ENCODE measurements at regions of chr5 and their contacts with region 1.

Region 1: DNA sequence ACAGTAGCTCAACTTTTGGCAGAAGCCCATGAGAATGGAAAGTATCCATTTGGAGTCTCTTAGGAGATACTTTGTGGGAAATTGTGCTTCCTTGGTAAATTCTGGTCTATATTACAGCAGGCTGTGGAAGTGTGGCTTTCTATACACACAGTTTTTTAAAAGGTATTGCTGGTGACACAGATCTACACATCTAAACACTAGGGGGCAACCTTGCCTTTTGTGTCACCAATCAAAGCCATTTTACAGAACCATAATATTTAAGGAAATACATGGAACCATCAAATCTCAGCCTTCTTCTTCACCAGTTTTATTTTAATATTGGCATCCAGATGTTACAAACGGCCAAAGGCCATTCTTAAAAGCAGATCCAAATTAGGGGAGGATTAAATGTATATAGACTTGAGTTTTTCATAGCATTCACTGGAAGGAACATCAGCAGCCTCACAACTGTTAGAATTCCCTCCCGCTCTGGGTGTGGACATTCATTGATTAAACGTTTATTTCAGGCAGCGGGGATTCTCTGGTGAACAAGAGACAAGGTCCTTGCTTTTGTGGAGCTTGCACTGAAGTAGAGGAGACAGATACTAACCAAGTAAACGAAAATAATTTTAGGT is 132.4 kb upstream of the EPB41L4A start:
- DNase-seq: peak; percentile 34 to 60 (median 57)
- H3K4me3 ChIP-seq: no peak overlapping the region
- H3K4me3 Mint-ChIP-seq: no peak overlapping the region
- H3K27ac ChIP-seq: no peak overlapping the region
- H3K27ac Mint-ChIP-seq: no peak overlapping the region
- H3K4me1 ChIP-seq: no peaks in the 10 kb centered on the region
- H3K4me1 Mint-ChIP-seq: peaks cover 0 to 2% (median 0%) of the 10 kb centered on the region in 4 donors
- H3K27me3 ChIP-seq: no peaks in the 10 kb centered on the region
- H3K27me3 Mint-ChIP-seq: no peaks in the 10 kb centered on the region

Region 2: GRCh38 chr5:112691758-112692157 is 140.2 kb after region 1 on chr5:
- CTCF ChIA-PET with region 1: no interaction called
- POLR2A ChIA-PET with region 1: no interaction called
- intact Hi-C with region 1: loop called (anchors 5 kb)
- DNase-seq: peak in 2 of 5 donors; percentile 9
- H3K4me3 ChIP-seq: no peak overlapping the region
- H3K4me3 Mint-ChIP-seq: no peak overlapping the region
- H3K27ac ChIP-seq: no peak overlapping the region
- H3K27ac Mint-ChIP-seq: no peak overlapping the region
- H3K4me1 ChIP-seq: no peaks in the 10 kb centered on the region
- H3K4me1 Mint-ChIP-seq: no peaks in the 10 kb centered on the region
- H3K27me3 ChIP-seq: peaks cover 12% of the 10 kb centered on the region
- H3K27me3 Mint-ChIP-seq: peaks cover 19 to 42% of the 10 kb centered on the region in 2 donors

Region 3: GRCh38 chr5:112848116-112848811 is 296.7 kb after region 1 on chr5:
- CTCF ChIA-PET with region 1: interaction called, 8 read pairs
- POLR2A ChIA-PET with region 1: no interaction called
- intact Hi-C with region 1: loop called (anchors 1 kb)
- DNase-seq: peak in 4 of 5 donors; percentile 37 to 43 (median 40)
- H3K4me3 ChIP-seq: no peak overlapping the region
- H3K4me3 Mint-ChIP-seq: peak overlapping the region in 2 of 8 donors; percentile 15 to 55
- H3K27ac ChIP-seq: no peak overlapping the region
- H3K27ac Mint-ChIP-seq: peak overlapping the region in 1 of 7 donors; percentile 10
- H3K4me1 ChIP-seq: peaks cover 3% of the 10 kb centered on the region
- H3K4me1 Mint-ChIP-seq: peaks cover 4 to 5% (median 4%) of the 10 kb centered on the region in 4 donors
- H3K27me3 ChIP-seq: no peaks in the 10 kb centered on the region
- H3K27me3 Mint-ChIP-seq: peaks cover 2 to 3% of the 10 kb centered on the region in 2 donors

Region 4: GRCh38 chr5:112968411-112969106 is 417.0 kb after region 1 on chr5:
- CTCF ChIA-PET with region 1: interaction called, 15 read pairs
- POLR2A ChIA-PET with region 1: no interaction called
- intact Hi-C with region 1: loop called (anchors 1 kb)
- DNase-seq: no peak
- H3K4me3 ChIP-seq: no peak overlapping the region
- H3K4me3 Mint-ChIP-seq: no peak overlapping the region
- H3K27ac ChIP-seq: no peak overlapping the region
- H3K27ac Mint-ChIP-seq: no peak overlapping the region
- H3K4me1 ChIP-seq: peaks cover 8% of the 10 kb centered on the region
- H3K4me1 Mint-ChIP-seq: peaks cover 7 to 12% (median 8%) of the 10 kb centered on the region in 4 donors
- H3K27me3 ChIP-seq: no peaks in the 10 kb centered on the region
- H3K27me3 Mint-ChIP-seq: no peaks in the 10 kb centered on the region

Region 5: DNA sequence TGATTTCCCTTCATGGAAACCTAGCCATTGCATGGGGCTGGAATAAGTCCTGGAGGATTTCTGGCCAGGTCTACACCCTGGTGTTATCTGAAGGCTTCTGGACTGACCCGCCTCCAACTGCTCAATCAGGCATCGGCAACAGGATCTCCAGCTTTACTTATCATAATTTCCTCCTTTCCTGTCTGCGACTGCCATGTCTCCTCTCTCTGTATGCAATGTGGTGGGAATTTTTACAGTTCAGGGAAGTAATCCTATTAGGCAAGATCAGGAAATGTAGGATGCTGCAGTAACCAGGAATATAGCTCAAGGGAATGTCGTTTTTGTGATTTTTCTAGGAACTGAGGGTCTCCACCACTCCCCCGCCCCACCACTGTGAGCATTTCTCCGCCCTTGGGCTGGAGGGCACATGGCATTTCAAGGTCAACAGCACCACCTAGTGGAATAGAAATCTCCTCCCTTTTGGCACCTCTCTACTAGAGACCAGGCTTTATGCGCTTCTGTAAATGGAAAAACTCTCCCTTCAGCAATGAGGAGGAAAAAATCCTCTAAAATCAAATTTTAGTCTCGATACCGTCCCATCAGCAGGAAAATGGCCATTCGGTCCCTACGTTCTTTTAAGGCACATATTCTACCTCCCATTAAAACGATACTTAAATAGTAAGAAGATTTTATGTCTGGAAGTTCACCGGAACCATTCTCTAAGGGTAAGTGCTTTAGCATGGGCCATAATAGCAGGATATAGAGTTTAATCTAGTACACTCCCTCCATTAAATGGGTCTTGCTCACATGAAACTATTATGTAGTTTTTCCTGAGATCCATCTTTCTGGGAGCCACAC is 1055.0 kb after region 1 on chr5:
- CTCF ChIA-PET with region 1: no interaction called
- POLR2A ChIA-PET with region 1: no interaction called
- intact Hi-C with region 1: loop called (anchors 1 kb)
- DNase-seq: peak; percentile 41 to 56 (median 55)
- H3K4me3 ChIP-seq: no peak overlapping the region
- H3K4me3 Mint-ChIP-seq: no peak overlapping the region
- H3K27ac ChIP-seq: no peak overlapping the region
- H3K27ac Mint-ChIP-seq: no peak overlapping the region
- H3K4me1 ChIP-seq: no peaks in the 10 kb centered on the region
- H3K4me1 Mint-ChIP-seq: peaks cover 0 to 3% (median 1%) of the 10 kb centered on the region in 4 donors
- H3K27me3 ChIP-seq: no peaks in the 10 kb centered on the region
- H3K27me3 Mint-ChIP-seq: peaks cover 15 to 18% of the 10 kb centered on the region in 2 donors